ENCODE measurements at regions of chr6 and their contacts with region 1.

Region 1: GRCh38 chr6:149082286-149082707 is 235.2 kb upstream of the TAB2 start:
- DNase-seq: peak; percentile 38 to 62
- ATAC-seq: peak; percentile 40 to 77
- H3K4me3 ChIP-seq: no peak overlapping the region
- H3K27ac ChIP-seq: no peak overlapping the region
- H3K4me1 ChIP-seq: no peaks in the 10 kb centered on the region
- H3K27me3 ChIP-seq: no peaks in the 10 kb centered on the region
- CTCF ChIP-seq: peak; percentile 49 to 76 (median 70)
- POLR2A ChIP-seq: no peak

Region 2: DNA sequence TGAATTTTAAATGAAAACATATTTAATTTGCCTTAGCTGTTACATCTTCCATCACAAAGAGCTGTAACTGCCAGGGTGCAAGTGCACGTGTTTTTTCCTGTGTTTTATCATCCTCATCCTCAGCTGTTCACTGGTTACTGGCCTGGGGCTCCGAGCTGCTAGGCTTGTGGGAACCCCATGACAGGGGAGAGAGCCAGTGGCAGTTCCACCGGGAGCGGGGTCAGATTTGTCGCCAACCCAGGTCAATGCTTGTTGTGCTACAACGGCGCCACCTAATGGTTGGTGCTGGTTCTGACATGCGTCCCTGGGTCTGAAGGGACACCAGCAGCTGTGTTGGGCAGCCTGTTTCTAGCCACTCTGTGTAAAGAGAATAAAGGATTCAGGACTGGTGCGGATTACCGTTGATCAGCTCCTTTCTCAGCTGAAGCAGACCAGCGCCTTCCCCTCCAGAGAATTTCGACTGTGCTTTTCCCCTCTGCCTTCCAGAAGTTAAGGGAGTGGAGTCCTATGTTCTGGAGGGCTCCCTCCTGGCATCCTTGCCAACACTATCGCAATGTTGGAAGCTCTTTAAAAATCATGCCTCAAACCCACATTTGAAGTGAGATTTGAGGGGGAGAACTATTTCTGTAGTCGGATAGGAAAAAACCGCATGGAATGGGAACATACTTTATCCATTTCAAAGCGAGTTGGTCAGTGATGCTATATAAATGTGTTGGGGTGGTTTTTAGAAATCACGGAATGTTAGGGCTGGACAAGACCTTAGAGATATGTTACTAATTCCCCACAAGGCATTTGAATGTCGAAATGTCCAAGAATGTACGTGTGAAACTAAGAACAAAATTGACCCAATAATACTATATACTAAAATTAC is 349.8 kb after region 1 on chr6:
- in situ Hi-C with region 1: loop called (anchors 5 kb)
- intact Hi-C with region 1: loop called (anchors 1 kb)
- DNase-seq: peak; percentile 76 to 83
- ATAC-seq: peak; percentile 87 to 91
- H3K4me3 ChIP-seq: no peak overlapping the region
- H3K27ac ChIP-seq: no peak overlapping the region
- H3K4me1 ChIP-seq: peaks cover 0 to 2% of the 10 kb centered on the region in 2 donors
- H3K27me3 ChIP-seq: no peaks in the 10 kb centered on the region
- CTCF ChIP-seq: peak; percentile 92 to 97 (median 95)
- POLR2A ChIP-seq: no peak

Region 3: GRCh38 chr6:149438855-149439254 is 356.6 kb after region 1 on chr6:
- in situ Hi-C with region 1: loop called (anchors 5 kb)
- intact Hi-C with region 1: no loop called
- DNase-seq: no peak
- ATAC-seq: no peak
- H3K4me3 ChIP-seq: no peak overlapping the region
- H3K27ac ChIP-seq: no peak overlapping the region
- H3K4me1 ChIP-seq: no peaks in the 10 kb centered on the region
- H3K27me3 ChIP-seq: no peaks in the 10 kb centered on the region
- CTCF ChIP-seq: no peak
- POLR2A ChIP-seq: no peak

Measured in gastrocnemius medialis (tissue), 4 donors.